Esophagus muscularis mucosa (tissue), 4 donors: ENCODE measurements at regions of chr5 and their contacts with region 1.

Region 1: DNA sequence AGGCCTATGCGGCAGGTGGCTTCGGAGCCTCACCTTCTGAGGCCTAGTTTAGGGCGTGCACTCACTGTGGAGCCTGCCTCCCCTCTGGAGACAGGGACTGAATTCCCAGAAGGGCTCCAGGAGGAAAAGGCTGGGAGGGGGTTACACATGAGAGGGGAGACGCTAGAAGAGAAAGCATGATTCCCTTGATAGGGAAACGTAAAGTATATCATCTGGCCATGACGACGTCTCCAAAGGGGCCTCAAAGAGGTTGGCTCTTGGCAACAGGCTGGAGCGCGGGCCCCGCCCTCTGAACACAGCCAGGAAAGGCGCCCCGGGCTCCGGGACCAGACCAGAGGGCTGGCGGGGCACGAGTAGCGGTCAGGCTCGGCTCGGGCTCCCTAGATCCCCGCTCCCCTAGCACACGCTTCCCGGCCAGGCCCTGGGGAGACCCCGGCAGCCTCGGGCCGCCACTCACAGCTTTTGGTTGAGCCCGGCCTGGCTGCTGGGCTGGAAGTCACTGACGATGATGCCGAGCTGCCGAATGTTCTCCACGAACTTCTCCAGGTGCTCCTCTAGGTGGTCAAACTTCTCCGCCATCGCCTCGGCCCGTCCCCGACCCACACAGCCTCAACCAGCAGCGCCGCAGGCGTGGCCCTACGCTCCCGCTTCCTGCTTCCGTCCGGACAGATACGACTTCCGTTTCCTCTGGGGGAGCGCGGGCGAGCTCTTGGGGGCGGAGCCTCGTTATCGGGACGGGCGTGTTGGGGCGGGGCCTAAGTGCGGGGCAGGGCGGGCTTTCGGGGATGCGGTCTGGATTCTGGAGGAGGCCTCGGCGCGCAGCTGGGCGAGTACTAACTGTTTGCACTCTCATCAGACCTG is at the start of gene MED10:
- DNase-seq: peak; percentile 98
- H3K4me3 ChIP-seq: peak within 1 kb of the TSS; percentile 81 to 98 (median 96)
- H3K27ac ChIP-seq: peak within 1 kb of the TSS; percentile 80 to 93 (median 89)
- H3K4me1 ChIP-seq: peaks cover 19 to 28% (median 26%) of the 10 kb centered on the region in 4 donors
- H3K27me3 ChIP-seq: no peaks in the 10 kb centered on the region
- CTCF ChIP-seq: no peak
- EP300 ChIP-seq: no peak
- POLR2A ChIP-seq: peak; percentile 33
- total RNA-seq, gene MED10: 29.9 to 47.2 (median 35.2) TPM

Region 2: DNA sequence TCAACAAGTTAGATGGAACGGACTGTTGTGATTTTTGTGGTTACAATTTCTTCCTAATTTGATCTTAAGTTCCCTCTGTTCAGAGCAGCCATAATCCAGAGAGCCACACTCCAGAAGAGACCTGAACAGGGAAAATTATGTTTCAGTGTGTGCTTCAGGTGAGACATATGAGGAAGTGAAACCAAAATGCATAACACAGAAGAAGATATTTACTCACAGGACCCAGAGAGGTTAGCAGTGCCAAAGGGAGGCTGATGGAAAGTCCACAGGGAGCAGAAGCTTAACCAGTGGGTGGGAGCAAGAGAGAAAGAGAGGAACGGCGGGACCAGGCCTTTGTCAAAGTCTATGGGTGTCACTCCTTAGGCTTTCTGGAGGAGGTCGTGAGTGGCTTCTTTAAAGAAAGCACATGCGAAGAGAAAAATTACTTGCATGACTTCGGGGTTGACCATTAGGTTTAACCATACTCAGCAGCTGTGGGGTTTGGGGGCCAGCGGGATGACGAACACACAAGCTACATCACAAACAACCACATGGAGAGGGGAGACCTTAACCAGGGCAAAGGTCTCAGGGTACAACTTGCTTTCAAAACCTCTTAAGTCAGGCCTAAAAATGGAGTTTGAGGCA is 141.2 kb before region 1 on chr5:
- intact Hi-C with region 1: no loop called
- DNase-seq: peak; percentile 60
- H3K4me3 ChIP-seq: no peak overlapping the region
- H3K27ac ChIP-seq: no peak overlapping the region
- H3K4me1 ChIP-seq: no peaks in the 10 kb centered on the region
- H3K27me3 ChIP-seq: no peaks in the 10 kb centered on the region
- CTCF ChIP-seq: no peak
- EP300 ChIP-seq: no peak
- POLR2A ChIP-seq: no peak

Region 3: GRCh38 chr5:6540111-6540827 is 162.1 kb after region 1 on chr5:
- intact Hi-C with region 1: no loop called
- DNase-seq: peak; percentile 66
- H3K4me3 ChIP-seq: no peak overlapping the region
- H3K27ac ChIP-seq: no peak overlapping the region
- H3K4me1 ChIP-seq: peaks cover 0 to 11% (median 2%) of the 10 kb centered on the region in 4 donors
- H3K27me3 ChIP-seq: no peaks in the 10 kb centered on the region
- CTCF ChIP-seq: no peak
- EP300 ChIP-seq: no peak
- POLR2A ChIP-seq: no peak

Region 4: DNA sequence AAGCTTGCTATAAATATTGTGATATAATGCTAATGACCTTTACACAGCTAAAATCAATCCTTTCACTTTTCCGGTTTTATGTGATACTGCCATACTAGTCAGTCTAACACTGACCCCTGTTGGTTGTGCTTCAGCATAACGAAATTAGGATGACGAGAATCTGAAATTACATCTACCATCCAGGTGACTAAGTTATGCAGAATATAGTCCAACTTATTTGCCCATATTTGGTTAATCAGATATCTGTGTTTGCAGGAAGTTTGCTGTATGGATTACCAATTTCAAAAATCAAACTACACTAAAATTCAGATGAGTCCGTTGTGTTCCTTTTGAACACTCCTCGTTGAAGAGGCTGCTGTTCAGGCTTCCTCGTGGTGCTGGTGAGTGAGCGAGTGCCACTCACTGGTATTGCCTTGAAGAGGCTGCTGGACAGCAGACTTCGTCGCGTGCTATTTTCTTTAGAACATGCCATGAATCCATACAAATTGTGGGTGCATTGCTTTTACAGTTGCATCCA is 367.6 kb after region 1 on chr5:
- intact Hi-C with region 1: loop called (anchors 10 kb)
- DNase-seq: no peak
- H3K4me3 ChIP-seq: no peak overlapping the region
- H3K27ac ChIP-seq: peak overlapping the region in 2 of 4 donors; percentile 28 to 44
- H3K4me1 ChIP-seq: peaks cover 0 to 10% (median 8%) of the 10 kb centered on the region in 4 donors
- H3K27me3 ChIP-seq: no peaks in the 10 kb centered on the region
- CTCF ChIP-seq: peak; percentile 70 to 82 (median 75)
- EP300 ChIP-seq: no peak
- POLR2A ChIP-seq: no peak

Region 5: GRCh38 chr5:6849316-6850105 is 471.4 kb after region 1 on chr5:
- intact Hi-C with region 1: no loop called
- DNase-seq: no peak
- H3K4me3 ChIP-seq: no peak overlapping the region
- H3K27ac ChIP-seq: no peak overlapping the region
- H3K4me1 ChIP-seq: no peaks in the 10 kb centered on the region
- H3K27me3 ChIP-seq: no peaks in the 10 kb centered on the region
- CTCF ChIP-seq: no peak
- EP300 ChIP-seq: no peak
- POLR2A ChIP-seq: no peak